Left ventricle myocardium superior (tissue), 1 donor: ENCODE measurements at regions of chrX and their contacts with region 1.

Region 1: DNA sequence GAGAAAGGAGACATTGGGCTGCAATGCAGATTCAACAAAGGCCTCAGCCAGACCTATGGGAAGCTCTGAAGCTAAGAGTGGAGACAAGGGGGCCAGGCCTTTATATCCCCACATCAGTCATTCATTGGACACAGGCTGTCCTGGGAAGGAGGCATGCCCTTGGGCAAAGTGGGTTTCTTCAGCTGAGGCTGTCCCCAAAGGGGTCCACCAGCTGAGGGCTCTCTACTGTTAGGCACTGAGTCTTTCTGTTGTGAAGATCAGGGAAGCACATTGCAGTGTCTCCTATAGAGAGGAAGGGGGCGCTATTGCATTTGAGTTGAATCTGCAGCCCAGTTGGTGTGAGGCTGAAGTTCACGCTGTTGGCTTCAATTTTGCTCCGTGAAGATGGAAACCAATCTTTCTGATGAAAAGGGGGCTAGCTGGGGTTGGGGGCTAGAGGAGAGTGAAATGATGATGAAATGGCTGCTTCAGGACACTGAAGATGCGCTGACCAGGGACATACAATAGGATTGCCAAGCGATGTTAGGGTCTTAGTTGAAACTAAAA is 48.0 kb downstream of the SLC25A5 start:
- DNase-seq: no peak
- ATAC-seq: peak; percentile 69

Region 2: DNA sequence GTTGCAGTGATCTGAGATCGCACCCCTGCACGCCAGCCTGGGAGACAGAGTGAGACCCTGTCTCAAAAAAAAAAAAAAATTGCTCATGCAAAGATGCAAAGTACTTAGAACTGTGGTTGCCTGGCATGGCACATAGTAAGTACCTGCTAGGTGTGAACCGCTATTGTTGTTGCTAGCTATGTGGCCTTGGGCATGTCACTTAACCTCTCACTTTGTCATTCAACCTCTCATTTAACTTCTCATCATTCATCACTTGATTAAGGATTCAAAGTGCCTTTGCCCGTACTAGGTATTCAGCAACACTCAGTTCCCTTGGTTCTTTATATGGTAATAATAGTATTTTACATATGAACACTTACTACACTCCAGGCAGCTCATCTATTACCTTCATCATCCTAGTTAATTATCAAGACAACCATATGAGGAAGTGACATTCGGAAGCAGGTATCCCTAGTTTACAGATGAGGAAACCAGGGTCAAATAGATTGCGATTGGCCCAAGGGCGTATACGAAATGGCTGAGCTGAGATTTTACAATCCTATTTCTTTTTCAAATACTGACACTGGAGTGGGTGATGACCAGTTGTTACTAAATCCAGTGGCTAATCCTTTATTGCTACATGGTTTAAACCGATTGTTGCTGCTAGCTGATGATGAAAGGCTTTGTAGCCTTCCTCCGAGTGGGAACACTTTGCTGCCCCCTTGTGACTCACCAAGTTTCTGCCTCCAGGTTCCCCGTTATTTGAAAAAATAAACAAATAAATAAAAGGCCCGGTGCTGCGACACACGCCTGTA is 213.4 kb after region 1 on chrX:
- intact Hi-C with region 1: loop called (anchors 10 kb)
- DNase-seq: peak; percentile 50
- ATAC-seq: peak; percentile 51